Naive thymus-derived CD8-positive, alpha-beta T cell (primary cell): ENCODE measurements at regions of chr1 and their contacts with region 1.

Region 1: DNA sequence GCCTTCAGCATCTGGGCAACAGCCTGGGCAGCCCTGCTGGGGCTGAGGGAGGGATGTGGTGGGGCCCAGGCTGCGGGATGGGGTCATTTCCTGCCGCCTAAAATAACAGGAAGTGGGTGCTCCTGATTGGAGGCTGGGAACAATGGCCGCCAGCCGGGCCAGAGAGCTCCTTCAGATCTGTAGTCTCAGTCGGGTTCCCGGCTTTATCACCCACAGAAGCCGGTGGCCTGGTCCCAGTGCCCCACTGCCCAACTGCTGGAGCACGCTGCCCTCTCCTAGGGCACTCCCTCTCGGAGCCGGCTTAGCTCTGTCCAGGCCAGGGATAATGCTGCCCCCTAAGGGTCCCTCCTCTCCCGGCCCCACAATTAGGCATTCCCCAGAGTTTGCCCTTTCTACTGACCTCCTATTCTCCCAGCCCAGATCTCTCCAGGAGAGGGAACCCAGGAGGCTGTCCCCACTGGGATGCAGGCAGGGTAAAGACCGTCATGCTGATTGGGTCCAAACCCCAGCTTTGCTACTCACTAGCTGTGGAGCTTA is 5.1 kb downstream of the MAP7D1 start:
- DNase-seq: peak; percentile 38 to 75 (median 57)
- ATAC-seq: peak; percentile 34 to 36
- H3K4me3 Mint-ChIP-seq: peak overlapping the region; percentile 76 to 95 (median 90)
- H3K27ac Mint-ChIP-seq: peak overlapping the region; percentile 92 to 99 (median 98)
- H3K4me1 Mint-ChIP-seq: peaks cover 52 to 79% (median 76%) of the 10 kb centered on the region in 4 donors
- H3K27me3 Mint-ChIP-seq: no peaks in the 10 kb centered on the region

Region 2: DNA sequence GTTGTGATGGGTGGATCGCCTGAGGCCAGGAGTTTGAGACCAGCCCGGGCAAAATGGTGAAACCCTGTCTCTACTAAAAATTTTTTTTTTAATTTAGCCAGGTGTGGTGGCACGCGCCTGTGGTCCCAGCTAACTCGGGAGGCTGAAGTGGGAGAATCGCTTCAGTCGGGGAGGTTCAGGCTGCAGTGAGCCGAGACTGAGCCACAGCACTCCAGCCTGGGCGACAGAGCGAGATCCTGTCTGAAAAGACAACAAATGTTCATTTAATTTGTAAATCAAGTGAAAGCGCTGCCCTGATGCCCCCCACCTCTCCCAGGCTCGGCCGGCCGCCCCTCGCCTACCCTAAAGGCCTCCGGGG is 77.4 kb before region 1 on chr1:
- POLR2A ChIA-PET with region 1: no interaction called
- DNase-seq: no peak
- ATAC-seq: no peak
- H3K4me3 Mint-ChIP-seq: peak overlapping the region in 3 of 10 donors; percentile 27 to 33 (median 30)
- H3K27ac Mint-ChIP-seq: no peak overlapping the region
- H3K4me1 Mint-ChIP-seq: peaks cover 0 to 12% (median 6%) of the 10 kb centered on the region in 4 donors
- H3K27me3 Mint-ChIP-seq: peaks cover 11 to 51% (median 19%) of the 10 kb centered on the region in 5 donors

Region 3: GRCh38 chr1:36172983-36173382 is 12.0 kb after region 1 on chr1:
- POLR2A ChIA-PET with region 1: interaction called, 14 read pairs
- DNase-seq: no peak
- ATAC-seq: no peak
- H3K4me3 Mint-ChIP-seq: no peak overlapping the region
- H3K27ac Mint-ChIP-seq: peak overlapping the region in 6 of 10 donors; percentile 20 to 75 (median 46)
- H3K4me1 Mint-ChIP-seq: peaks cover 11 to 37% (median 22%) of the 10 kb centered on the region in 4 donors
- H3K27me3 Mint-ChIP-seq: no peaks in the 10 kb centered on the region

Region 4: DNA sequence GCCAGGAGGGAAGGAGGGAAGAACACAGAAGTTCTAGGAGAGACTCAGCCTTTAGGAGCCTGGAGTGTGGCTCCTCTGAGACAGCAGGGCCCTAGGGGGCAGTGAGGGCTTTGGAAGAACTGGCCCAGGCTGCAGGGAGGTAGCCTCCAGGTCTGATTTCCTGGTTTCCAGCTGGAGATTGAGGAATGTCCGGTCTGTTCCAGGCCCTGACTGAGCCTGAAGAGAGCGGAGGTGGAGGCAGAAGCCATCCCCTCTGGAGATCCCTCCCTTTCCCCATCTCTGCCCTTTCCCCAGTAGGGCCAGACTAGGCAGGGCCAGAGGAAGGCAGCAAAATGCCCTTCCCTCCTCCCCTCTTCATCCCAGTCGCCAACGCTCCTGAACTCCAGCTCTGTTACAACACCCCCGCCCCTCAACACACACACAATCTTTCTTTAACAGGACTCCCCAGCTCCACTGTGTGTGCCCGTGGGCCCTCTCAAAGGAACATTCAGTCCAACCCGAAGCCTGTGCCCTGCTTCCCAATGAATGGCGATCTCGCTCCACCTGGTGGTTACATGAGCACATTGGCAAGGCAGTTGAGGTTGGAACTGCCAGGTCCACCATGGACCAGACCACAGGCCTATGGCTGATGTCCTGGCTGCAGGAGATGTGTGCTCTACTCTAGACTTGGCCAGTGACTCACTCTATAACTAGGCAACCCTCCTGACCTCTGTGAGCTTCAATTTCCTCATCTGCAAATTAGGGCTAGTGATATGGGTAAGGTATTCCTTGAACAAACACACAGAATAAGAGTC is 27.0 kb after region 1 on chr1:
- POLR2A ChIA-PET with region 1: interaction called, 227 read pairs
- DNase-seq: peak; percentile 57 to 92 (median 80)
- ATAC-seq: peak; percentile 98 to 99
- H3K4me3 Mint-ChIP-seq: no peak overlapping the region
- H3K27ac Mint-ChIP-seq: peak overlapping the region; percentile 57 to 91 (median 74)
- H3K4me1 Mint-ChIP-seq: peaks cover 3 to 13% (median 8%) of the 10 kb centered on the region in 4 donors
- H3K27me3 Mint-ChIP-seq: no peaks in the 10 kb centered on the region